H1 (cell line): ENCODE measurements at regions of chr7 and their contacts with region 1.

Region 1: DNA sequence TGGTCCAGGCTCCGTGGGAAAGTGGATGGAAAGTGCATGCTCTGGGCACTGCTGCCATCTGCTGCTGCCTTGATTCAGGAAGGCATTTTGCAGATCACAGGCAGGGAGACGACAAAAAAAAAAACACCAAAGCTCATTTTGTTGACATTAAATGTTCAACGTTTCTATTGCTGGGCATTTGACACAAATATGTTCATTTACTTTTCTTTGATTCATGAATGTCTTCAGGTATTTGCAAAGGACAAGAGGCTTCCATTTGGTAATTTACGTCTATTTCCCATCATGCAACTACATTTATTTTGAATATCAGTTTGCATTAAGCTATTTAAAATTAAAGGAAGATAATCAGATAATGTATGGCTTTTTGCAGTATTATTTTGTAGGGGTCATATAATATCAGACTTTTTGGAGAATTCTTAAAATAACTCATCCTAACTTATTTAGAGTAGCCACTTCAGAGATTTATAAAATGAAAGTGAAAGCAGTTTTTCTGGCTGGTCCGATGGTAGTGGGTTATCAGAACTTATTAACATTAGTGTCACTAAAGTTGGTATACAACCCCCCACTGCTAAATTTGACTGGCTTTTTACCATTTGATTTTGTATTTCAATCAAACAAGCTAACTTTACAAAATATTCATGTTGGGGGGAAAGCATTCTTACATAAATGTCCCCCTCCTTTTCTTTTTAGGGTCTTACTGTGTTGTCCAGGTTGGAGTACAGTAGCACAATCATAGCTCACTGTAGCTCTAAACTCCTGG is 65.3 kb downstream of the PDIA4 start:
- DNase-seq: no peak
- H3K4me3 ChIP-seq: peak overlapping the region; percentile 8 to 65 (median 39); a peak in 6 of 8 replicates
- H3K27ac ChIP-seq: no peak overlapping the region
- H3K4me1 ChIP-seq: peaks cover 0 to 4% (median 3%) of the 10 kb centered on the region in 4 experiments; a peak in 3 of 7 replicates
- H3K27me3 ChIP-seq: no peaks in the 10 kb centered on the region
- CTCF ChIP-seq: peak; percentile 68 to 84 (median 74)
- EP300 ChIP-seq: no peak
- POLR2A ChIP-seq: no peak
- RAD21 ChIP-seq: peak; percentile 93 to 96

Region 2: GRCh38 chr7:148773334-148773733 is 189.7 kb before region 1 on chr7:
- CTCF ChIA-PET with region 1: interaction called, 10 read pairs
- POLR2A ChIA-PET with region 1: no interaction called
- DNase-seq: no peak
- H3K4me3 ChIP-seq: no peak overlapping the region
- H3K27ac ChIP-seq: no peak overlapping the region
- H3K4me1 ChIP-seq: peaks cover 0 to 8% (median 4%) of the 10 kb centered on the region in 4 experiments; a peak in 4 of 7 replicates
- H3K27me3 ChIP-seq: no peaks in the 10 kb centered on the region
- CTCF ChIP-seq: no peak
- EP300 ChIP-seq: no peak
- POLR2A ChIP-seq: no peak
- RAD21 ChIP-seq: no peak

Region 3: DNA sequence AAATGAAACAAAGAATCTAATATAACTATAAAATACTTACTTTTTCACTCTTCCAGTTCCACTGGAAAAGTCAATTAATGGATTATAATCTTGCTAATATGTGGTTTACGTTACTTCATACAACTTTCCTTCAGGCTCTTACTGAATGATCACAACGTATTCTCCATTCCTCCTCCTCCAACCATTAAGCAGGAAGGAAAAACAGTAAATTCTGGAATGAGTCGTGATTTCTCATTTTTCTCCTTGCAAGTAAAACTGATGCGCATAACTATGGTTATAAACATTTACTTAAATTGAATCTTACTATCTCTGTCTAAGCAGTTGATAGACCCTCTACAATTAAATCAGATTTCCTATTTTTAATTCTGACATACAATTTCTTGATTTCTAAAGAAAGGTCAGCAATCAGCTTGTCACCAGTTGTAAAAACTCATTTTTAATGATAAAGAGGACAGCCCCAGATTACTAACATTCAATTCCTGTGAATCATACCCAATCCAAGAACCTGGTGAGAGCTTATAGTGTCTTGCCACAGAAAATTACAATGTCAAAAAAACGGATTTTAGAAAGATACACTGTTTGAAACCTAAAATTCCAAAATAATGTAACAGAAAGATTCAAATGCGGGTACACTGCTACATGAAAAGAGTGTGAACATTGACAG is 143.2 kb before region 1 on chr7:
- CTCF ChIA-PET with region 1: interaction called, 10 read pairs
- POLR2A ChIA-PET with region 1: no interaction called
- DNase-seq: no peak
- H3K4me3 ChIP-seq: no peak overlapping the region
- H3K27ac ChIP-seq: no peak overlapping the region
- H3K4me1 ChIP-seq: no peaks in the 10 kb centered on the region; a peak in 1 of 7 replicates
- H3K27me3 ChIP-seq: no peaks in the 10 kb centered on the region
- CTCF ChIP-seq: no peak
- EP300 ChIP-seq: no peak
- POLR2A ChIP-seq: no peak
- RAD21 ChIP-seq: no peak

Region 4: GRCh38 chr7:148856891-148857290 is 106.1 kb before region 1 on chr7:
- CTCF ChIA-PET with region 1: interaction called, 12 read pairs
- POLR2A ChIA-PET with region 1: no interaction called
- DNase-seq: no peak
- H3K4me3 ChIP-seq: no peak overlapping the region
- H3K27ac ChIP-seq: no peak overlapping the region
- H3K4me1 ChIP-seq: peaks cover 0 to 9% (median 4%) of the 10 kb centered on the region in 4 experiments; a peak in 3 of 7 replicates
- H3K27me3 ChIP-seq: no peaks in the 10 kb centered on the region
- CTCF ChIP-seq: no peak
- EP300 ChIP-seq: no peak
- POLR2A ChIP-seq: no peak
- RAD21 ChIP-seq: no peak

Region 5: GRCh38 chr7:148975896-148976295 is 12.9 kb after region 1 on chr7:
- CTCF ChIA-PET with region 1: interaction called, 15 read pairs
- POLR2A ChIA-PET with region 1: interaction called, 4 read pairs
- DNase-seq: no peak
- H3K4me3 ChIP-seq: no peak overlapping the region
- H3K27ac ChIP-seq: no peak overlapping the region
- H3K4me1 ChIP-seq: peaks cover 4 to 11% (median 8%) of the 10 kb centered on the region in 4 experiments
- H3K27me3 ChIP-seq: no peaks in the 10 kb centered on the region
- CTCF ChIP-seq: no peak
- EP300 ChIP-seq: no peak
- POLR2A ChIP-seq: no peak
- RAD21 ChIP-seq: no peak

Region 6: GRCh38 chr7:149104749-149105148 is 141.7 kb after region 1 on chr7:
- CTCF ChIA-PET with region 1: no interaction called
- POLR2A ChIA-PET with region 1: no interaction called
- DNase-seq: no peak
- H3K4me3 ChIP-seq: no peak overlapping the region
- H3K27ac ChIP-seq: no peak overlapping the region
- H3K4me1 ChIP-seq: no peaks in the 10 kb centered on the region
- H3K27me3 ChIP-seq: no peaks in the 10 kb centered on the region
- CTCF ChIP-seq: no peak
- EP300 ChIP-seq: no peak
- POLR2A ChIP-seq: no peak
- RAD21 ChIP-seq: no peak